ENCODE measurements at regions of chr5 and their contacts with region 1.

Region 1: DNA sequence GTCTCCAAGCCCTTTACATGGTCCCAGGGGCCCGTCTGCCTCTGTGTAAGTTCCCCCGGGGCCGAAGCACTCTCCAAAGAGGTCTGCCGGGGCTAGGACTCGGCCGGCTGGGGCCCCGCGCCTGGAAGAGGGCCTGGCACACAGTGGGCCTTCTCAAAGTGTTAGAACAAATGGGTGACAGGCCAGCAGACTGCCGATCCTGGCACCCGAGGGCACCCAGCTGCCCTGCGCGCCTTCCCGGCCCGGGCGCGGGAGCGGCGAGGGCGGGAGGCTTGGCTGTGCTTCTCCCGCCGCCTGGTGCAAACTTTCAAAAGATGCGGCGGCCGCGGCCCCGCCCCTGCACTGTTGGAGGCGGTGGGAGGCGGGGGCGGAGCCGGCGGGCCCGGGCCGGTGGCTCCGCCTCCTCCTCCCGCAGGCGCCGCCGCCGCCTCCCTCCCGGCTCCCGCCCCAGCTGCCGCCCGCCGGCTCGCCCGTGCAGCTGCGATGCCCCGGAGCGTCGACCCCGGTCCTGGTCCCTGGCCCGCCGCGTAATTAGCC is at the start of gene NEURL1B:
- DNase-seq: peak; percentile 50 to 87 (median 76)
- H3K4me3 ChIP-seq: peak within 1 kb of the TSS; percentile 52 to 94 (median 78)
- H3K27ac ChIP-seq: peak within 1 kb of the TSS; percentile 41 to 98 (median 90)
- H3K27me3 ChIP-seq: peaks cover 0 to 8% (median 0%) of the 10 kb centered on the region in 45 donors
- CTCF ChIP-seq: peak in 19 of 56 donors; percentile 7 to 46 (median 15)
- total RNA-seq, gene NEURL1B: 8.3 to 21.9 (median 13.9) TPM

Region 2: GRCh38 chr5:172479044-172479783 is 161.7 kb before region 1 on chr5:
- intact Hi-C with region 1: loop called (anchors 5 kb)
- DNase-seq: peak; percentile 59 to 92 (median 84)
- H3K4me3 ChIP-seq: peak overlapping the region in 2 of 59 donors; percentile 6 to 20
- H3K27ac ChIP-seq: peak overlapping the region in 18 of 59 donors; percentile 0 to 46 (median 22)
- H3K27me3 ChIP-seq: no peaks in the 10 kb centered on the region
- CTCF ChIP-seq: peak; percentile 60 to 97 (median 90)

Region 3: DNA sequence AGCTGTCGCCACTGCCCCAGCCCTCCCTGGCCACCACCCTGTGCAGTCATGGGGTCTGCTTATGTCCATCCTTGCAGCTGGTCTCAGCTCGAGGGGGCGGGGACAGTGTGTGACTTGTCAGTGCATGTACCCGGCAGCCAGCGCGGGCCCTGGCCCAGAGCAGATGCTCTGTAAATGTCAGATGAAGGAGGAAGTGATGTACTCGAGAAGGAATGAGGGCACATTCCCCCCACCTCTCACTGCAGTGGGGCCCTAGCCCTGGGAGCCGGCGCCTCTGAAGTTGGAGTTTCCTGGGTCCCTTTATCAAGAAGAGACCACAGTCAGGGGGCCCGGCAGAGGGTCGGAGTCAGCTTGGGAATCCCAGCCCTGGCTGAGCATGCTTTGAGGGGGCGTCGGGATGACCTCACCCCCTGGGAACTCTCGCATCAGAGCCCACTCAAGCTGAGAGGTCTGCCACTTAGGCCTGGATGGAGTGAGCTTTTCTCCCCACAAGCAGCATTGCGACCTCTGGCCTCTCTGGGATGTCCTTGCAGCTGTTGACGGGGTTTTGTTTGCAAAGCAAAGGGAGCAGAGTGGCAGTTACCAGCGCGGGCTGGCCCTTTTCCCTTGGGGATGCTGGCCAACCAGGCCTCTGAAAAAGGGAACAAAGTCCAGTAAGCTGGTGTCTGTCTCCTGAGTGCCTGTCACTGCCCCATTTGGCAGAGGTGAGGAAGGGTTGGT is 19.2 kb after region 1 on chr5:
- intact Hi-C with region 1: loop called in 1 of 2 experiments (anchors 2 kb)
- DNase-seq: peak in 9 of 10 donors; percentile 77 to 93 (median 85)
- H3K4me3 ChIP-seq: peak overlapping the region in 5 of 59 donors; percentile 0 to 27 (median 19)
- H3K27ac ChIP-seq: peak overlapping the region; percentile 51 to 98 (median 93)
- H3K27me3 ChIP-seq: no peaks in the 10 kb centered on the region
- CTCF ChIP-seq: peak in 31 of 56 donors; percentile 11 to 54 (median 30)

Measured in dorsolateral prefrontal cortex (tissue), 120 donors.